ENCODE measurements at regions of chr15 and their contacts with region 1.

Region 1: GRCh38 chr15:56918046-56918938 is at the start of gene TCF12:
- DNase-seq: peak; percentile 96 to 97 (median 97)
- ATAC-seq: peak; percentile 94 to 98 (median 97)
- H3K4me3 ChIP-seq: peak within 1 kb of the TSS; percentile 67 to 97 (median 91)
- H3K27ac ChIP-seq: peak within 1 kb of the TSS; percentile 78 to 98 (median 96)
- H3K4me1 ChIP-seq: peaks cover 2 to 61% (median 50%) of the 10 kb centered on the region in 12 donors
- H3K27me3 ChIP-seq: no peaks in the 10 kb centered on the region
- CTCF ChIP-seq: peak in 11 of 12 donors; percentile 15 to 64 (median 41)
- POLR2A ChIP-seq: peak in 1 of 2 donors; percentile 85
- total RNA-seq, gene TCF12: 31.8 to 77.3 (median 46.8) TPM

Region 2: GRCh38 chr15:56835718-56836171 is 82.5 kb before region 1 on chr15:
- intact Hi-C with region 1: loop called in 1 of 10 experiments (anchors 10 kb)
- DNase-seq: peak in 4 of 5 donors; percentile 32 to 60 (median 42)
- ATAC-seq: peak; percentile 49 to 74 (median 60)
- H3K4me3 ChIP-seq: no peak overlapping the region
- H3K27ac ChIP-seq: peak overlapping the region in 1 of 12 donors; percentile 15
- H3K4me1 ChIP-seq: peaks cover 0 to 24% (median 10%) of the 10 kb centered on the region in 12 donors
- H3K27me3 ChIP-seq: no peaks in the 10 kb centered on the region
- CTCF ChIP-seq: no peak
- POLR2A ChIP-seq: no peak

Region 3: DNA sequence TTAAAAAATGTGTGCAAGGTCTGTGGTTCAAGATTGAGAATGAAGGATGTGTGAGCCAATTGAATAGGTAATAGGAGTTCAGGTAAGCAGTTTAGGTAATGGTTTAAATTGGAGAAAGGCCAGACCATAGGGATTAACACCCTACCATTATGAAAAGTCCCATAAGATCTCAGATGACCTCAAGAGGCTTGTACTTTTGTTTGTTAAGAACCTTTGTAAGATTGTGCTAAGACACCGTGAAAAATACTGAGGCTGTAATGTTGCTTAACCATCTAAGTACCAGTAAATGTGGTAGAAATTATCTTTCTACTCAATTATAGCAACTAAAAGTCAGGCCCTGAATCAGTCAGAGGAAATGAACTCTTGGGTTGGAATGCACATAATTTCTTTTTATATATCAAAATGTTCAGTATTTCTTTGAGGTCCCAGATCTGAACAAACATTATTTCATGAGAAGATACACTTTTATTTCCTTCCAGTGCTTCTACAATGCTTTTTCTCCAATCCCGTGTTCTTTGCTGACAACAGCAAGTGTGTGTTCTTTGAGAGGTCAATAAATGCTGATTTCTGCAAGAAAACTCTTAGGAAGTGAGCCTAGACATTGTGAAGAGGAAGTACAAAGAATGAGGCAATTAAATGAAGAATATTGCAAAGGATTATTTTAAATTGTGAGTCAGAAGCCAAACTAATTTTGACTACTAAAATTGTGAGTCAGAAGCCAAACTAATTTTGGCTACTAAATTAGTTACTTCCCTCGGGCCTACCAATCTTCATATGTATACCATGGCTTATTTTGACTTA is 66.6 kb after region 1 on chr15:
- intact Hi-C with region 1: loop called in 1 of 10 experiments (anchors 10 kb)
- DNase-seq: no peak
- ATAC-seq: peak in 3 of 4 donors; percentile 41 to 71 (median 60)
- H3K4me3 ChIP-seq: no peak overlapping the region
- H3K27ac ChIP-seq: peak overlapping the region in 5 of 12 donors; percentile 21 to 78 (median 34)
- H3K4me1 ChIP-seq: peaks cover 0 to 92% (median 57%) of the 10 kb centered on the region in 12 donors
- H3K27me3 ChIP-seq: no peaks in the 10 kb centered on the region
- CTCF ChIP-seq: no peak
- POLR2A ChIP-seq: no peak

Region 4: DNA sequence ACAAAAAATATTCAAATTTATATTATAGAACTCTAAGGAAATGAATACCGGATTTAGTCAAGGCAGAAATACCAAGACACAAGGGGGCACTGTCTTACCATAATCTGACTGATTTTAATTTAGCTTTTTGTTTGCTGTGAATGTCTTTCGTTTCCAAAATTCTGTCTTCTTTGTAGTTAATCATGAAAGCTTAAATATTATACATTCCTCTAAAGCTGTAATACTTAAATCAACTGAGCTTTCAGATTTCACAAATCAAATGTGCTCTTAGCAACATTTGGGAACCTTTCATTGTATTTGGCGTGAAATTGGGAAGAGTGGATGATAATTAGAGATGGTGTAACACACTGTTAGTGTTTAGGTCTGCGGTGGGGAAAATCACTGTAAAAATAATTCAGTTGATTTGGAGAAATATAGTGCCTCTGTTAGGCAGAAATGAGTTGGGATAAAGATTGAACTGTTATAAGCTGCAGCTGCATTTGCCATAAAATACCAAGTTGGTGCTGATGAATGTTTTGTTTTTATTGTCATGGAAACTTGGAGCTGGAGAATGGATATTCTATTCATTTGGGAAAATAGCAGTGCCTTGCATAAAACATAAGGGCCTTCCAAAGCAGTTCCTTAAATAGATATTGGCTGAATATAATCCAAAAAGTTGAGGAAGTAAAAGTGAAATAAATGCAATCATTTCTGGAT is 228.4 kb after region 1 on chr15:
- intact Hi-C with region 1: loop called in 2 of 10 experiments (anchors 5 to 10 kb)
- DNase-seq: peak in 1 of 5 donors; percentile 27
- ATAC-seq: peak in 2 of 4 donors; percentile 32 to 56
- H3K4me3 ChIP-seq: peak overlapping the region in 10 of 12 donors; percentile 4 to 45 (median 30)
- H3K27ac ChIP-seq: peak overlapping the region in 10 of 12 donors; percentile 2 to 67 (median 39)
- H3K4me1 ChIP-seq: peaks cover 3 to 60% (median 40%) of the 10 kb centered on the region in 12 donors
- H3K27me3 ChIP-seq: no peaks in the 10 kb centered on the region
- CTCF ChIP-seq: peak; percentile 62 to 86 (median 80)
- POLR2A ChIP-seq: no peak

Region 5: DNA sequence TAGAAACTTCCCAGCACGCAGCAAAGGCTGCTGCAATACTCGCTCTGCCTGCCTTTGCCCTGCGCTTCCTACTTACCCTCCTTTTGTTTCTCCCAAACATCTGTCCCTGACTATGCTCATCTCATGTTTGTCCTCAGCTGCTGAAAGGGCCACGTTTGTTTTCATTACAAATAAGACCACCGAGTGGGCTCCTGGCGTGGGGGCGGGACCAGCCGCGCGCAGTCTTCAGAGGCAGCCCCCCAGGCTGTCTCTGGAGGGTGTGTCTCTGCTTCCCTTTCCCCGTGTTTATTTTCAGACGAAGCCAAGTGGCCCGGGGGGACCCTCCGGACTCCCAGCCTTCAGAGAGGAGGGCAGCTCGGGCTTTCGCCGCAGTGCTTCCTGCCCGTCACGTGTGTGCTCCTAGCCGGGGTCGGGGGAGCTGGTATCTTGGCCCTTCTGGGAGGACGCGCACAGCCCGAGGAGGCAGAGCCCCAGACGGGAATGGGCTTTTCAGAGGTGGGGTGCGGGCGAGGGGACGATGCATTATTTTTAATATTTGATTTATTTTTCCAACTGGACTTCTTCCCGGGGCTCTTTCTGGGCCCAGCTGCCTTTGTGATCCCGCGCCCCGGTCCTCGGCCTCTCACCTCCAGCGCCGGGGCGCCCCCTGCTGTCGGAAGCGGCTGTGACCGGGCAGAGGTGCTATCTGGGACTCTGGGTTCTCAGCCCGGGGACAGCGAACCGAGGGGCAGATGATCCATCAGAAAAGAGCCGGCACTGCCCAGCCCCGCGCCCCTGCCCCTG is 388.1 kb after region 1 on chr15:
- intact Hi-C with region 1: loop called in 3 of 10 experiments (anchors 10 kb)
- DNase-seq: peak; percentile 86 to 94 (median 87)
- ATAC-seq: peak; percentile 64 to 92 (median 88)
- H3K4me3 ChIP-seq: peak overlapping the region; percentile 33 to 84 (median 63)
- H3K27ac ChIP-seq: peak overlapping the region in 7 of 12 donors; percentile 4 to 63 (median 30)
- H3K4me1 ChIP-seq: peaks cover 0 to 17% (median 8%) of the 10 kb centered on the region in 12 donors
- H3K27me3 ChIP-seq: no peaks in the 10 kb centered on the region
- CTCF ChIP-seq: peak; percentile 86 to 94 (median 90)
- POLR2A ChIP-seq: no peak

Measured in heart left ventricle (tissue), 16 donors.